ENCODE measurements at regions of chr12 and their contacts with region 1.

Region 1: DNA sequence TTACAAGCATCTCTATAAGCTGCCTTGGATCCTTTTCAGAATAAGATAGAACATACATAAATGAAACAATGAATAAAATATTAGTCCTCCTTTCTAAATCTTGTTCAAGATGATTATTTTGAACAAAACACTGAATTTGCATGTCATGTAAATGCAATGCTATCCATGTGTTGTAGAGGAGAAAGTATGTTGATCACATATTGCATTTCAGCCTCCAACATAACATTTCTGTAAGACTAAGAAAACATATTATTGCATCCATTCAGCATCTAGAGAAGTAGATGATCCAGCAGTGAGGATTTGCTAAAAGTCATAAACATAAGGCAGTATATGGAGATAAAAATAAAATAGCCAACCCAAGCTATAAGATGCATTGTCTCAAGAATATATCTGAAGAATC is 172.6 kb downstream of the CPNE8 start:
- DNase-seq: no peak
- H3K4me3 ChIP-seq: no peak overlapping the region
- H3K27ac ChIP-seq: no peak overlapping the region
- H3K4me1 ChIP-seq: no peaks in the 10 kb centered on the region
- H3K27me3 ChIP-seq: no peaks in the 10 kb centered on the region
- CTCF ChIP-seq: no peak

Region 2: GRCh38 chr12:38638406-38638805 is 94.4 kb before region 1 on chr12:
- CTCF ChIA-PET with region 1: no interaction called
- dilution Hi-C with region 1: no loop called
- in situ Hi-C with region 1: no loop called
- intact Hi-C with region 1: no loop called
- DNase-seq: no peak
- H3K4me3 ChIP-seq: no peak overlapping the region
- H3K27ac ChIP-seq: no peak overlapping the region
- H3K4me1 ChIP-seq: no peaks in the 10 kb centered on the region
- H3K27me3 ChIP-seq: peaks cover 3% of the 10 kb centered on the region
- CTCF ChIP-seq: no peak

Region 3: GRCh38 chr12:38775457-38775856 is 42.7 kb after region 1 on chr12:
- CTCF ChIA-PET with region 1: no interaction called
- dilution Hi-C with region 1: loop called (anchors 5 kb)
- in situ Hi-C with region 1: no loop called
- intact Hi-C with region 1: no loop called
- DNase-seq: peak; percentile 25
- H3K4me3 ChIP-seq: no peak overlapping the region
- H3K27ac ChIP-seq: no peak overlapping the region
- H3K4me1 ChIP-seq: no peaks in the 10 kb centered on the region
- H3K27me3 ChIP-seq: no peaks in the 10 kb centered on the region
- CTCF ChIP-seq: no peak

Region 4: DNA sequence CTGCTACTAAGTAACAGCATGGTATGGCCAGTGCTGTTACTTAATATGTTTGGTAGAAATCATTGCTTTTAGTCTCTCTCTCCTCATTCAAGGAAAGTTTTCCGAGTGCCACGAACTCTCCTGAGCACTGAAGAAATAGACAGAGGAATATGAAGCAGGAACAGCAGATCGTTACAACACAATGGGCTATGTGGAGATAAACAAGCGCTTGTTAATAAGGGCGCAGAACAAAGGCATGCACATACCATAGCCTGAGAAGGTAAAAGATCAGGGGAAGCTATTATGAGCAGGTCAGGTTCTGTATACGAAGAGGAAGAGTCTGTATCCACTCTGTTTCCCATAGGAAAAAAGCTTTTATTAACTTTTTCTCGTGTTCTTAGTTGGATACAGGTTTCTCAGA is 328.8 kb after region 1 on chr12:
- CTCF ChIA-PET with region 1: no interaction called
- dilution Hi-C with region 1: no loop called
- in situ Hi-C with region 1: no loop called
- intact Hi-C with region 1: no loop called
- DNase-seq: no peak
- H3K4me3 ChIP-seq: no peak overlapping the region
- H3K27ac ChIP-seq: no peak overlapping the region
- H3K4me1 ChIP-seq: no peaks in the 10 kb centered on the region
- H3K27me3 ChIP-seq: no peaks in the 10 kb centered on the region
- CTCF ChIP-seq: no peak